ENCODE measurements at regions of chr17 and their contacts with region 1.

Region 1: DNA sequence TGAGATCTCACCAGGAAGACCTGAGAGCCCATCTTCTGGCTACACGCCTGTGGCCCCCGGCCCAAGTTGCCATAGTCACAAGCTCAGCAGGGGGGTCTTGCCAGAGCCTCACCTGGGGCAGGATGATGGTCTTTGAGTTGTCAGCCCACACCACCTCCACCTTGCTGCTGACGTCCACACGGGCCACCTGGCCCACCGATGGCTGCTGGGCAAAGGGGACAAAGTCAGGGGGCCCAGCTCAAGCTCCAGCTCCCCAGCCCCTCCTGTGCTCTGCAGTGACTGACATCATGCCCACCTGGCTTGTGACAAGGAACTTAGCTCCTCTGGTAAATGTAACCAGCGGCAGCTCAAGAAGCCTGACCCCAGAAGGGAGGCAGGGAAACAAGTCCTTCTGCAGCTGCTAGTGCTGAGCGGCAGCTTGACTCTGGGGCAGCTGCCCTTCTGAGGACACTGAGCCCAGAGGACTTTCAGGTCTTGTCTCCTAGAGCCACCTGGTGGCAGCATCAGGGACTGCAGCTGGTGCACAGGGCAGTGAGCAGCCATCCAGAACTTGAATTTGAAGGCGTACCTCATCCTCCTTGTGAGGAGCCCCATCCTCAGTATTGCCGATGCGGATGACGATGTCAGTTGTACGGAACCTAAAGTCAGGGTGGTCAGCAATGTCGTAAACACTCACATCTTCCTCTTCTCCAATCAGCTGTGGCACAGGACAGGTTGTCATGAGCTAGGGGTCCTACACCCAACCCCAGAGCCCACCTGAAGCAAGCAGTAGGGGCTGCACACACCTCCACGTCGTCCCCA is 13.5 kb downstream of the SPHK1 start:
- DNase-seq: peak; percentile 76 to 90 (median 80)
- ATAC-seq: peak; percentile 98
- H3K4me3 ChIP-seq: no peak overlapping the region
- H3K27ac ChIP-seq: no peak overlapping the region; the same call in 2 of the 3 replicates
- H3K4me1 ChIP-seq: peaks cover 0 to 9% of the 10 kb centered on the region in 2 experiments; a peak in 2 of 5 replicates
- H3K27me3 ChIP-seq: no peaks in the 10 kb centered on the region
- CTCF ChIP-seq: peak; percentile 94 to 99 (median 95)
- EP300 ChIP-seq: no peak
- POLR2A ChIP-seq: no peak
- RAD21 ChIP-seq: peak; percentile 84 to 93

Region 2: GRCh38 chr17:76304226-76305134 is 93.4 kb before region 1 on chr17:
- CTCF ChIA-PET with region 1: interaction called, 38 read pairs
- POLR2A ChIA-PET with region 1: interaction called, 4 read pairs
- in situ Hi-C with region 1: loop called (anchors 5 kb)
- intact Hi-C with region 1: loop called (anchors 1 kb)
- DNase-seq: no peak
- ATAC-seq: no peak
- H3K4me3 ChIP-seq: no peak overlapping the region
- H3K27ac ChIP-seq: no peak overlapping the region
- H3K4me1 ChIP-seq: peaks cover 0 to 4% of the 10 kb centered on the region in 2 experiments; a peak in 3 of 5 replicates
- H3K27me3 ChIP-seq: no peaks in the 10 kb centered on the region
- CTCF ChIP-seq: no peak
- EP300 ChIP-seq: no peak
- POLR2A ChIP-seq: no peak
- RAD21 ChIP-seq: no peak

Region 3: DNA sequence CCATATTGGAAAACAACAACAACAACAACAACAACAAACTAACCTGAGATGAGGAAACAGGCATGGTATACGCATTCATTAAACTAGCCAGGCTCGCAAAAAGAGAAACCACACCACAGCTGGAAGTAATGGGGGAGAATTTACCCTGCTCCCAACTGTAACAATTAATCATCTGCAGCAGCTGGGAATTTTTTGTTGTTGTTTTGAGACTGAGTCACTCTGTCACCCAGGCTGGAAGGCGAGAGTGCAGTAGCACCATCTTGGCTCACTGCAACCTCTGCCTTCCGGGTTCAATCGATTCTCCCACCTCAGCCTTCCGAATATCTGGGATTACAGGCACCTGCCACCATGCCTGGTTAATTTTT is 60.5 kb before region 1 on chr17:
- CTCF ChIA-PET with region 1: no interaction called
- POLR2A ChIA-PET with region 1: no interaction called
- in situ Hi-C with region 1: no loop called
- intact Hi-C with region 1: no loop called
- DNase-seq: no peak
- ATAC-seq: no peak
- H3K4me3 ChIP-seq: no peak overlapping the region
- H3K27ac ChIP-seq: no peak overlapping the region
- H3K4me1 ChIP-seq: no peaks in the 10 kb centered on the region; a peak in 1 of 5 replicates
- H3K27me3 ChIP-seq: no peaks in the 10 kb centered on the region
- CTCF ChIP-seq: no peak
- EP300 ChIP-seq: no peak
- POLR2A ChIP-seq: no peak
- RAD21 ChIP-seq: no peak

Region 4: GRCh38 chr17:76365256-76365903 is 32.5 kb before region 1 on chr17:
- CTCF ChIA-PET with region 1: interaction called, 13 read pairs
- POLR2A ChIA-PET with region 1: no interaction called
- in situ Hi-C with region 1: no loop called
- intact Hi-C with region 1: loop called (anchors 2 kb)
- DNase-seq: peak in 3 of 4 experiments; percentile 5 to 58 (median 25)
- ATAC-seq: peak; percentile 75
- H3K4me3 ChIP-seq: no peak overlapping the region
- H3K27ac ChIP-seq: no peak overlapping the region
- H3K4me1 ChIP-seq: peaks cover 4 to 28% of the 10 kb centered on the region in 2 experiments; a peak in 4 of 5 replicates
- H3K27me3 ChIP-seq: no peaks in the 10 kb centered on the region
- CTCF ChIP-seq: peak; percentile 52 to 70 (median 54)
- EP300 ChIP-seq: no peak
- POLR2A ChIP-seq: no peak
- RAD21 ChIP-seq: peak; percentile 27 to 36; a peak in 3 of 4 replicates

Region 5: GRCh38 chr17:76370261-76370993 is 27.5 kb before region 1 on chr17:
- CTCF ChIA-PET with region 1: interaction called, 13 read pairs
- POLR2A ChIA-PET with region 1: no interaction called
- in situ Hi-C with region 1: no loop called
- intact Hi-C with region 1: loop called (anchors 2 kb)
- DNase-seq: peak; percentile 56 to 67 (median 58)
- ATAC-seq: peak; percentile 83
- H3K4me3 ChIP-seq: no peak overlapping the region
- H3K27ac ChIP-seq: no peak overlapping the region; the same call in 2 of the 3 replicates
- H3K4me1 ChIP-seq: peaks cover 4 to 20% of the 10 kb centered on the region in 2 experiments; a peak in 4 of 5 replicates
- H3K27me3 ChIP-seq: no peaks in the 10 kb centered on the region
- CTCF ChIP-seq: peak; percentile 75 to 92 (median 85)
- EP300 ChIP-seq: no peak
- POLR2A ChIP-seq: no peak
- RAD21 ChIP-seq: peak; percentile 20 to 45; a peak in 3 of 4 replicates

Region 6: GRCh38 chr17:76384222-76384986 is 13.5 kb before region 1 on chr17 and contains the start of gene SPHK1:
- CTCF ChIA-PET with region 1: interaction called, 4 read pairs
- POLR2A ChIA-PET with region 1: interaction called, 15 read pairs
- in situ Hi-C with region 1: no loop called
- intact Hi-C with region 1: no loop called
- DNase-seq: peak; percentile 87 to 92 (median 90)
- ATAC-seq: peak; percentile 80
- H3K4me3 ChIP-seq: peak within 1 kb of the TSS; percentile 74
- H3K27ac ChIP-seq: peak within 1 kb of the TSS; percentile 93
- H3K4me1 ChIP-seq: peaks cover 14 to 66% of the 10 kb centered on the region in 2 experiments
- H3K27me3 ChIP-seq: no peaks in the 10 kb centered on the region
- CTCF ChIP-seq: no peak
- EP300 ChIP-seq: no peak
- POLR2A ChIP-seq: peak; percentile 80
- RAD21 ChIP-seq: no peak
- polyA plus RNA-seq, gene SPHK1: 0.21 to 1.9 TPM

Region 7: GRCh38 chr17:76408052-76408849 is 10.4 kb after region 1 on chr17:
- CTCF ChIA-PET with region 1: no interaction called
- POLR2A ChIA-PET with region 1: interaction called, 12 read pairs
- in situ Hi-C with region 1: no loop called
- intact Hi-C with region 1: no loop called
- DNase-seq: peak; percentile 43 to 66 (median 50)
- ATAC-seq: peak; percentile 53
- H3K4me3 ChIP-seq: no peak overlapping the region
- H3K27ac ChIP-seq: no peak overlapping the region
- H3K4me1 ChIP-seq: peaks cover 16 to 30% of the 10 kb centered on the region in 2 experiments
- H3K27me3 ChIP-seq: no peaks in the 10 kb centered on the region
- CTCF ChIP-seq: peak; percentile 82 to 83 (median 82)
- EP300 ChIP-seq: no peak
- POLR2A ChIP-seq: no peak
- RAD21 ChIP-seq: peak; percentile 45 to 76; a peak in 3 of 4 replicates

Region 8: GRCh38 chr17:76432712-76433336 is 34.9 kb after region 1 on chr17:
- CTCF ChIA-PET with region 1: no interaction called
- POLR2A ChIA-PET with region 1: no interaction called
- in situ Hi-C with region 1: no loop called
- intact Hi-C with region 1: no loop called
- DNase-seq: no peak
- ATAC-seq: 0 out of 3 replicates have a peak, but pooled peaks have one; percentile 59
- H3K4me3 ChIP-seq: no peak overlapping the region
- H3K27ac ChIP-seq: no peak overlapping the region
- H3K4me1 ChIP-seq: no peaks in the 10 kb centered on the region; a peak in 2 of 5 replicates
- H3K27me3 ChIP-seq: no peaks in the 10 kb centered on the region
- CTCF ChIP-seq: peak; percentile 15 to 41 (median 30); a peak in 4 of 6 replicates
- EP300 ChIP-seq: no peak
- POLR2A ChIP-seq: no peak
- RAD21 ChIP-seq: no peak

Region 9: DNA sequence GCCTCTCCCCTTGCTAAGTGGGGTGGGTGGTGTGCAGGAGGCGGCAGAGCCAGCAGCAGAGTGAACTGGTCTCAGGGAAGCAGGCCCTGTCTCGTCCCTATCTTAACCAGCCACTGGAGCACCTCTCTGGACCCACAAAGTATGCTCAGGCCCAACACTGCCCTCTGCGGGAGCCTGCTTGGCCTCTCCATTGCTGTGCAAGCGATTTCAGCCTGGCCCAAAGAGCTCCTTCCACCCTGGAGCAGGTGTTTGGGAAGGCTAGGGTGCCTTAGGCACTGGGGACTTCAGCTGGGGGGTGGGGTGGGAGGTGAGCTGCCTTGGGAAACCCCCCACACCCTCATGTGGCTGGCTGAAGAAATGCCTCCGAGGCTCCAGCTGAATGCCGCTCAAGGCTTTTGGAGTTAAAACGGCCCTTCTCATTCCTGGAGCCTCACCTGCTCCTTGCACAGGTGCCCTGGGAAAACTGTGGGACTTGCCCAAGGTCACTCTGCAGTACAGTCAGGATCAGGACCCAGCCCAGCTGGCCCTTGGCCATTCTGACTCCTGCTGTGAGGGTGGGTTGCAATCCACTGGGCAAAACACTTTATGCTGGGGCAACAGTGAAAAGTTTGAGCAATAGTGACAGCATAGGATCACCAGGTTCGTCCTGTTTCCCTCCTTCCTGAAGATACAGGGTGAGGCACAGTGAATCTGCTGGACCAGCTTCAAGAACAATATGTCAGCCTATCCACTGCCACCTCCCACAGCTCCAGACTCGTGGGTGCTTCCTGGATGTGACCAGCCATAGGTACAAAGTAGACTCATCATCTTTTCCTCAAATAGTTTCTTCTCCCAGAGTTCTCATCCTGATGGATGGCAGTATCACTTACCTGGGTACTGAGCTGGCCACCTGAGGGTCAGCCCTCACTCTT is 60.9 kb after region 1 on chr17:
- CTCF ChIA-PET with region 1: no interaction called
- POLR2A ChIA-PET with region 1: no interaction called
- in situ Hi-C with region 1: loop called (anchors 5 kb)
- intact Hi-C with region 1: loop called (anchors 2 kb)
- DNase-seq: peak; percentile 52 to 84 (median 70)
- ATAC-seq: peak; percentile 98
- H3K4me3 ChIP-seq: no peak overlapping the region
- H3K27ac ChIP-seq: no peak overlapping the region
- H3K4me1 ChIP-seq: peaks cover 0 to 8% of the 10 kb centered on the region in 2 experiments; a peak in 3 of 5 replicates
- H3K27me3 ChIP-seq: peaks cover 4 to 15% of the 10 kb centered on the region in 2 experiments; a peak in 2 of 5 replicates
- CTCF ChIP-seq: peak; percentile 82 to 92 (median 89)
- EP300 ChIP-seq: no peak
- POLR2A ChIP-seq: no peak
- RAD21 ChIP-seq: peak; percentile 75 to 92